H1 (cell line): ENCODE measurements at regions of chr14 and their contacts with region 1.

Region 1: DNA sequence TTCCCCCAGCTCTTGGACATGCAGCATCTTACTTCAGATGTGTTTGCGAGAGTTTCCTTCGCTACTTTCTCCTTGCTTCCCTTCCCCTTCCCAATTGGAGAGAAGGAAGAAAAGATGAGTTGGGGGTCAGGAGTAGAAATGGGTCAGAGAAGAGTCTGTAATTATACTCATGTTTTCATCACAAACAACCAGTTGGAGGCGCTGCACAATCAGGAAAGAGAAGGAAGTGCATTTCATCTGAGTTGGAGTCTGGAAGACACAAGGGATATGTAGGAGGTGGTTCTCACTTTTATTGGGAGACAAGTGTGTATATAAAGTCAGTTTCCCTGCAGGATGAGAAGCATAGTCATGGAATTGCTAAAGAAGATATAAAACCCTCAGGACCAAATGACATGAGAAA is 31.3 kb upstream of the VSX2 start:
- DNase-seq: no peak
- H3K4me3 ChIP-seq: no peak overlapping the region
- H3K27ac ChIP-seq: no peak overlapping the region
- H3K4me1 ChIP-seq: peaks cover 0 to 2% (median 0%) of the 10 kb centered on the region in 4 experiments; a peak in 1 of 7 replicates
- H3K27me3 ChIP-seq: no peaks in the 10 kb centered on the region
- CTCF ChIP-seq: peak in 2 of 3 experiments; percentile 82 to 84; a peak in 3 of 4 replicates
- EP300 ChIP-seq: no peak
- POLR2A ChIP-seq: no peak
- RAD21 ChIP-seq: peak; percentile 87 to 91

Region 2: DNA sequence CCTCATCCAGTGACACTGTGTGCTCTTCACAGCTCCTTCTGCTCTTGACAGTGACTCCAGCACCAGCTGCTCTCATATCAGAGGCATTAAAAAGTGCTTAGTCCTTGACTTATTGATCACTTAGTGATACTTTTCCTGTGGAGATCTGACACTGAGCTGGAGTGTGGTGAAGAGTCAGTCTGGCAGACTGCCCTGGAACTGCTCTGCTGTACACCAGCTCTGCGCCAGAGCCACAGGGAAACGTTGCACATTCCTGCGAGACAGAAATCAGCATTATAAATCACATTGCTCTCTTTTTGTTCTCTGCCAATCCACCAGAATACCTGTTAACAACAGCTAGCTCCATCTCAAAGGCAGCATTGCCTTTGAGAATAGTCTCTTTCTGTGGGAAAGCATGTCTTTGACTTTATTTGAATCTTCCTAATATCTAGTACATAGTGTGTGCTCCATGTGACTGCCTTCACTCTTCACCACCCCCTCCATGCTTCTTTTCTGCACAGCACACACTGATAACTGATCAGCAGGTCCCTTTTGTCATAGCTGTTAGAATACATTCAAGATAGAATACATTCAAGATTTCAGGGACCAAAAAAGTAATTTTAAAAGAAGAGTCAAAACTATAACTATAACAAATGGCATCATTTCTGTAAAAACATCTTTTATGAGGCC is 16.9 kb before region 1 on chr14:
- CTCF ChIA-PET with region 1: interaction called, 19 read pairs
- POLR2A ChIA-PET with region 1: no interaction called
- DNase-seq: no peak
- H3K4me3 ChIP-seq: no peak overlapping the region
- H3K27ac ChIP-seq: no peak overlapping the region
- H3K4me1 ChIP-seq: no peaks in the 10 kb centered on the region
- H3K27me3 ChIP-seq: no peaks in the 10 kb centered on the region
- CTCF ChIP-seq: no peak
- EP300 ChIP-seq: no peak
- POLR2A ChIP-seq: no peak
- RAD21 ChIP-seq: no peak

Region 3: GRCh38 chr14:74231784-74232183 is 23.8 kb after region 1 on chr14:
- CTCF ChIA-PET with region 1: interaction called, 19 read pairs
- POLR2A ChIA-PET with region 1: no interaction called
- DNase-seq: no peak
- H3K4me3 ChIP-seq: no peak overlapping the region
- H3K27ac ChIP-seq: no peak overlapping the region
- H3K4me1 ChIP-seq: no peaks in the 10 kb centered on the region
- H3K27me3 ChIP-seq: peaks cover 0 to 2% (median 0%) of the 10 kb centered on the region in 4 experiments; a peak in 2 of 7 replicates
- CTCF ChIP-seq: no peak
- EP300 ChIP-seq: no peak
- POLR2A ChIP-seq: no peak
- RAD21 ChIP-seq: no peak

Region 4: DNA sequence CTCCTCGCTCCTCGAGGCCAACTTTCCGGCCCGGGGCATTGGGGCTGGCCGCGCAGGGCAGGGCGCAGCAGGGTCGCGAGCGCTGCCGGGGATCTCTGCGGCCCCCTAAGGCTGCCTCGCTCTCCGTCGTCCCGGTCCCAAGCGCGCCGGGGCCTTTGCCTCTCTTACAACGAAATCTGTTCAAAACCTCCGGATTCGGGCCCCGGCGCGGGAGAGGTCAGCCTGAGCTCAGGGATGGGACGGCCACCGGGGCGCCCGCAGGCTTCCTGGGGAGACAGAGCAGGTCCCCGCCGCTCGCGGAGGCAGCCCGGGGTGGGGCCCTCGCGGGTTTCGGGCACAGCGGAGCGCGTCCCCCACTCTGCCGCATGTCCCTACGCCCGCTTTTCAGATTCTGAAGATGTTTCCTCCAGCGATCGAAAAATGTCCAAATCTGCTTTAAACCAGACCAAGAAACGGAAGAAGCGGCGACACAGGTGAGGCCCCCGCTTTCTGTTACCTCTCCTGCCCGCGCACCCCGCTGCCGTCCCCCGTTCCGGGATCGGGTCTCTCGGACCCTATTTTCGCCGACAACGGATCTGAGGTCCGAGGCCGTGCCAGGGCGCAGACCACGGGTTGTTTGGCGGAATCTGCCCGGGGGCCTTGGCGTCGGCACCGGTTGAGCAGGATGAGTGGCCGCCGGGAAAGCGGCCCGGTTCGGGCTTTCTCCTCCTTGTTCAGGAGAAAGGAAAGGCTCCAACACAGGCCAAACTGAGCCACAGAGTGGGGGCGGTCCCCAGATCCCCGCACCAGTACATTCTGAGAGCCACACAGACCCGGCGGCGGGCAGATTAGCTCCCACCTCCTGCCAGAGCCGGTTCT is 33.1 kb after region 1 on chr14:
- CTCF ChIA-PET with region 1: interaction called, 123 read pairs
- POLR2A ChIA-PET with region 1: no interaction called
- DNase-seq: peak in 1 of 2 experiments; percentile 81
- H3K4me3 ChIP-seq: peak overlapping the region; percentile 21 to 55 (median 38); a peak in 7 of 8 replicates
- H3K27ac ChIP-seq: no peak overlapping the region
- H3K4me1 ChIP-seq: peaks cover 6 to 35% (median 15%) of the 10 kb centered on the region in 4 experiments
- H3K27me3 ChIP-seq: peaks cover 59 to 83% (median 75%) of the 10 kb centered on the region in 4 experiments
- CTCF ChIP-seq: no peak
- EP300 ChIP-seq: no peak
- POLR2A ChIP-seq: no peak
- RAD21 ChIP-seq: no peak

Region 5: DNA sequence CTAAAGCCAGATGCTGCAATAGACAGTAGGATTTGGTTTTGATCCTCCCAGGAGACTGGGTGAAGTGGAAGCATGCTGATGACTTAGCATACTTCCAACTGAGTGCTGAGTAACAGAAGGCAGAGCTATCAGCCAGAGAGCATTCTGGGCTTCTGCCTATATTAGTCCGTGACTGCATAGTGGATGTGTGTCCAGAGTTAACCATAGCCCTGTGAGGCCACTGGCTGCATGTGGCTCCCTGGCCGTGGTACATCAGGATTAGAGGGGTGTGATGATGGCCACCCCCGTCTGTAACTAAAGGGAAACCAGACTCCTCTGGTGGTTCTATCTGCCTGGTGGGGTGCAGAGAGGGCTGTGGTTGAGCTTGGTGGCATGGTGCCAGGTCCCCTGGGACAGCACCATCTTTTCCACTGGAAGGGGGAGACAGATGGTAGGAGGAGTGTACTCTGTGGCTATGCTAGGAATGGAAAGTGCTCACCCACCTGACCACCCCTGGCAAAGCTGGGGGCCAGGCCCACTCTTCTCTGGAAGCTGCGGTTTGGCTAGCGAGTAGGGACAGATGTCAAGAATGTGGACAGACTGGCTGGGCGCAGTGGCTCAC is 67.4 kb after region 1 on chr14:
- CTCF ChIA-PET with region 1: interaction called, 11 read pairs
- POLR2A ChIA-PET with region 1: no interaction called
- DNase-seq: no peak
- H3K4me3 ChIP-seq: no peak overlapping the region
- H3K27ac ChIP-seq: no peak overlapping the region
- H3K4me1 ChIP-seq: no peaks in the 10 kb centered on the region
- H3K27me3 ChIP-seq: no peaks in the 10 kb centered on the region; a peak in 1 of 7 replicates
- CTCF ChIP-seq: no peak
- EP300 ChIP-seq: no peak
- POLR2A ChIP-seq: no peak
- RAD21 ChIP-seq: no peak